Activated naive CD4-positive, alpha-beta T cell treated with anti-CD3 and anti-CD28 coated beads, Interleukin-2, amount 10 ng/mL, durations not matched to agents 7 days and 5 days (primary cell): ENCODE measurements at regions of chr14 and their contacts with region 1.

Region 1: GRCh38 chr14:74860906-74861733 is 14.8 kb downstream of the PROX2 start:
- DNase-seq: peak; percentile 94
- H3K4me3 Mint-ChIP-seq: no peak overlapping the region
- H3K27ac Mint-ChIP-seq: no peak overlapping the region
- H3K4me1 Mint-ChIP-seq: peaks cover 3% of the 10 kb centered on the region
- H3K27me3 Mint-ChIP-seq: peaks cover 9% of the 10 kb centered on the region

Region 2: DNA sequence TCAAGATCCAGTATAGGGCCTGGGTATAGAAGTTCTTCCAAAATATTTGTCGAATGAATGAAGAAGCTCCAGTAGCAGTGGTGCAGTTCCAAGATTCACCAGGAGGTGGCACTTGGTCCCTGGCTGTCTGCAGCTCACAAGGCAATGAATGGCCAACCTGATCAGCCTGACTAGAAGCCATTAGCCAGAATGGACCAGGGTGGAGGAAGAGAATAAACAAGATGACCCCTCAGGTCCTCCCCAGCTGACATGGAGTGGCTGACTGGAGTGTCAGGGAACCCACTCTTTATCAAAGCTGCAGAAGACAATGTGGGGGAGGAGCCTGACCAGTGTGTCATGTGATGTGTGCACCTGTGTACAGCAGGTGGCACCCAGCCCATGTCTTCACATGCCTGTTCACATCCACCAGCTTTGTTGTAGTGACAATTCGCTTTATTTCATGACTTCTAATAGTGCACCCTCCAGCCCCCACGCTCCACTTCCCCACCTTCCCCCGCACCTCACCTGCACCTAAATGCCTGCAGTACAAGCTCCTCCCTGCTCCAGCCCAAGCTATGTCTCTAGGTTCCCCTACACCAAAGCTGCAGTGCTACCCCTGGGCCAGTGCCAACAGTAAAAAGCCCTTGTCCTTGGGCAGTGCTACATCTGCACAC is 252.0 kb before region 1 on chr14:
- CTCF ChIA-PET with region 1: interaction called, 31 read pairs
- DNase-seq: peak; percentile 92
- H3K4me3 Mint-ChIP-seq: no peak overlapping the region
- H3K27ac Mint-ChIP-seq: no peak overlapping the region
- H3K4me1 Mint-ChIP-seq: peaks cover 13% of the 10 kb centered on the region
- H3K27me3 Mint-ChIP-seq: peaks cover 69% of the 10 kb centered on the region

Region 3: GRCh38 chr14:74875941-74876913 is 15.1 kb after region 1 on chr14 and contains the start of gene PROX2:
- CTCF ChIA-PET with region 1: interaction called, 46 read pairs
- DNase-seq: peak; percentile 39
- H3K4me3 Mint-ChIP-seq: no peak within 1 kb of the TSS
- H3K27ac Mint-ChIP-seq: peak within 1 kb of the TSS; percentile 15
- H3K4me1 Mint-ChIP-seq: peaks cover 28% of the 10 kb centered on the region
- H3K27me3 Mint-ChIP-seq: peaks cover 3% of the 10 kb centered on the region

Region 4: DNA sequence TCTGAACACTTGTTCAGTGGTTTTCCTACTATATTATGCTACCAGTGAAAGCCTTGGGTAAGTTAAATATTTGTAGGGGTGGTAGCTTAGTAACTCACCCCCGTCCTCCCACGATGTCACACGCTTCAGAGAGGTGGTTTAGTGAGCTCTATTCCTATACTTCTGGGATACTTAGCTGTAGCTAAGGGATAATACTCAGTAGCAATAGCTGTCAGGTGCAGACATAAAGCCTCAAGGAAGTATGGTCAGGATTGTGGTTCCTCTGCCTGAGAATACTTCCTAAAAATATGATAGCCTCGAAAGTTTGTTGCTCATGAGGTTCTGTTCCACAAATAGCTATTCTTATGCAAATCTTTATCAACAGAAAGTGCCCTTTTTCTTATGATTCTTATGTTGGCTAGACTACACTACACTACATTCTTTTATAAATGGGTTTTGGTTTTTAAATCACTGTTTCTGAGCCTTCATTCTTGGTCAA is 32.5 kb after region 1 on chr14:
- CTCF ChIA-PET with region 1: interaction called, 395 read pairs
- DNase-seq: no peak
- H3K4me3 Mint-ChIP-seq: no peak overlapping the region
- H3K27ac Mint-ChIP-seq: no peak overlapping the region
- H3K4me1 Mint-ChIP-seq: no peaks in the 10 kb centered on the region
- H3K27me3 Mint-ChIP-seq: no peaks in the 10 kb centered on the region

Region 5: DNA sequence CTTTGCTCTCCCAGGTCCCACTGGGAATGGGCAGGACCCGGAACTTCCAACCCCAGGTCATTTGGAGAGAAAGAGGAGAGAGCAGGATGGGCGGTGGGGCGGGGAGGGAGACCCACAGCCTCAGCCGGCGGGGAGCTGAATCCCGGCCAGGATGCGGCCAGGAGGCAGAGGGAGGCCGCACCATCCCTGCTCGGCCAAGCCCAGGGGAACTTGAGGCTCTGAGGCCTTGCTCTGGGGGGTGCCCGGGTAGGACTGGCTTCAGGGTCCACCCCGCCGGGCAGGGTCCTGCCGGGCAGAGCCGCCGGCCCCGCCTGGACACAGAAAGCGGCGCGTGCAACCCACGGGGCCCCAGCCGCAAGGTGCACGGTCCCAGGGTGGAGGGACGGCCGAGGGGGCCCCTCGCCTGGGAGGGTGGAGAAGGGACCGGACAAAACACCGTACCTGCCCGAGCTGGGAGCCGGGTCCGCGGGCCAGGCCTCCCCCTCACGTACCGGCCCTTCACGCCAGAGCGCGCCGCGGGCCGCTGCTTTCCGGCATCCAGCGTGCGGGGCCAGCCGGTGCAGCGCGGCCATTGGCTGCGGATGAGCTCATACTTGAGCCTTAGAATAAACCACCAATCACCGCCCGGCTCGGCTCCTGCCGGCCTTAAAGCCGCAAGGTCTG is 61.8 kb after region 1 on chr14 and contains the start of gene RPS6KL1:
- CTCF ChIA-PET with region 1: interaction called, 15 read pairs
- DNase-seq: peak; percentile 88
- H3K4me3 Mint-ChIP-seq: peak within 1 kb of the TSS; percentile 69
- H3K27ac Mint-ChIP-seq: no peak within 1 kb of the TSS
- H3K4me1 Mint-ChIP-seq: peaks cover 13% of the 10 kb centered on the region
- H3K27me3 Mint-ChIP-seq: peaks cover 29% of the 10 kb centered on the region

Region 6: DNA sequence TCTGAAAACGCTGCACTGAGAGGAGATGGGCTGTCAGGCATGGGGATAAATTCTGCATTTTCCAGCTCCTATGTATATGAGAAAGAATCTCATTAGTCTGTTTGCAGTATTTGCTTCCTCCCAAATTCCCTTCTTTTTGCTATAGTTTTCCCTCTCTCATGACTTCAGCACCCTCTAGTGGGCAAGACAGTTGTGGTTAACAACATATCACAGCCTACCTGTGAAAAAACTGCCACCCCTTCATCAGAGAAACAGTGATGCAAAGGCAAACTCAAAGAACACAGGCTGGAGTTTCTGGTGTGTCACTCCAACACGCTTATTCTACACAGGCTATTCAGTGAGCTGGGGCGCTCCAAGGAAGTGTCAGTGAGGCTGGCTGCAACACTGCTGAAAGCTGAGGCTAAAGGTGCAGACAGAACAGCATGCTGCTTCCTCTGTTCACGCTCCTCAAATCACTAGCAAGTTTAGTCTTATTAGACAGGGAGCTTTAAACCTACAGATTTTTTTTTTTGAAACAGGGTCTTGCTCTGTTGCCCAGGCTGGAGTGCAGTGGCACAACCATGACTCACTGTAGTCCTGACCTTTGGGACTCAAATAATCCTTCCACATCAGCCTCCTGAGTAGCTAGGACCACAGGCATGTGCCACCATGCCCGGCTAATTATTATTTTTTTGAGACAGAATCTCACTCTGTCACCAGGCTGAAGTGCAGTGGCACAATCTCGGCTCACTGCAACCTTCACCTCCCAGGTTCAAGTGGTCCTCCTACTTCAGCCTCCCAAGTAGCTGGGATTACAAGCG is 227.7 kb after region 1 on chr14:
- CTCF ChIA-PET with region 1: interaction called, 42 read pairs
- DNase-seq: peak; percentile 67
- H3K4me3 Mint-ChIP-seq: no peak overlapping the region
- H3K27ac Mint-ChIP-seq: no peak overlapping the region
- H3K4me1 Mint-ChIP-seq: no peaks in the 10 kb centered on the region
- H3K27me3 Mint-ChIP-seq: no peaks in the 10 kb centered on the region